ENCODE measurements at regions of chr13 and their contacts with region 1.

Region 1: GRCh38 chr13:21297914-21298831 is 121.7 kb downstream of the MRPL57 start:
- DNase-seq: peak; percentile 85
- H3K4me3 Mint-ChIP-seq: peak overlapping the region; percentile 96
- H3K27ac Mint-ChIP-seq: peak overlapping the region; percentile 70
- H3K4me1 Mint-ChIP-seq: peaks cover 36% of the 10 kb centered on the region
- H3K27me3 Mint-ChIP-seq: no peaks in the 10 kb centered on the region

Region 2: DNA sequence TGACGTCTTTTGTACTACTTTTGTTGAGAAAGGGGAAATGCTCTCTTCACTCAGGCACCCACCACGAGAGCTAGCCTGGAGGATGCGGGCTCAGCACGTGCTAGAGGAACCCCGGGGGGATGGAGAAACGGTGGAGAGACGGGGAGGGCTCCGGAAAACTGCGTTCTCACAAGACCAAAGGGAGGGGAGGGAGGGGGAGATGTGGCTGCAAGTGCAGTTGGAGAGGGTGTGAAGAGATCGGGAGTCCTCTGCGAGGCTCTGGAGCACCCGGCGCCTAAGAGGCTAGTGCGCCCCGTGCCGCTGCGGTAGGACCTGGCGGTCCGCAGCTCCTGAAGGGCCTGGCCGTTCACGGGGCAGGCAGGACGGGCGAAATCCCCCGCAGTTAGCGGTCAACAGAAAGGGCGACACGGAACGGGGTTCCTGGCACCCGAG is 352.2 kb before region 1 on chr13:
- intact Hi-C with region 1: loop called (anchors 1 kb)
- DNase-seq: no peak
- H3K4me3 Mint-ChIP-seq: peak overlapping the region; percentile 34
- H3K27ac Mint-ChIP-seq: no peak overlapping the region
- H3K4me1 Mint-ChIP-seq: peaks cover 6% of the 10 kb centered on the region
- H3K27me3 Mint-ChIP-seq: peaks cover 36% of the 10 kb centered on the region

Region 3: GRCh38 chr13:21137696-21138095 is 160.5 kb before region 1 on chr13:
- intact Hi-C with region 1: no loop called
- DNase-seq: no peak
- H3K4me3 Mint-ChIP-seq: no peak overlapping the region
- H3K27ac Mint-ChIP-seq: no peak overlapping the region
- H3K4me1 Mint-ChIP-seq: peaks cover 17% of the 10 kb centered on the region
- H3K27me3 Mint-ChIP-seq: peaks cover 15% of the 10 kb centered on the region

Region 4: GRCh38 chr13:21316376-21316775 is 18.2 kb after region 1 on chr13:
- intact Hi-C with region 1: loop called (anchors 2 kb)
- DNase-seq: no peak
- H3K4me3 Mint-ChIP-seq: no peak overlapping the region
- H3K27ac Mint-ChIP-seq: peak overlapping the region; percentile 62
- H3K4me1 Mint-ChIP-seq: peaks cover 8% of the 10 kb centered on the region
- H3K27me3 Mint-ChIP-seq: no peaks in the 10 kb centered on the region

Region 5: GRCh38 chr13:21383090-21383489 is 84.9 kb after region 1 on chr13:
- intact Hi-C with region 1: loop called (anchors 5 kb)
- DNase-seq: no peak
- H3K4me3 Mint-ChIP-seq: no peak overlapping the region
- H3K27ac Mint-ChIP-seq: no peak overlapping the region
- H3K4me1 Mint-ChIP-seq: peaks cover 3% of the 10 kb centered on the region
- H3K27me3 Mint-ChIP-seq: no peaks in the 10 kb centered on the region

Region 6: DNA sequence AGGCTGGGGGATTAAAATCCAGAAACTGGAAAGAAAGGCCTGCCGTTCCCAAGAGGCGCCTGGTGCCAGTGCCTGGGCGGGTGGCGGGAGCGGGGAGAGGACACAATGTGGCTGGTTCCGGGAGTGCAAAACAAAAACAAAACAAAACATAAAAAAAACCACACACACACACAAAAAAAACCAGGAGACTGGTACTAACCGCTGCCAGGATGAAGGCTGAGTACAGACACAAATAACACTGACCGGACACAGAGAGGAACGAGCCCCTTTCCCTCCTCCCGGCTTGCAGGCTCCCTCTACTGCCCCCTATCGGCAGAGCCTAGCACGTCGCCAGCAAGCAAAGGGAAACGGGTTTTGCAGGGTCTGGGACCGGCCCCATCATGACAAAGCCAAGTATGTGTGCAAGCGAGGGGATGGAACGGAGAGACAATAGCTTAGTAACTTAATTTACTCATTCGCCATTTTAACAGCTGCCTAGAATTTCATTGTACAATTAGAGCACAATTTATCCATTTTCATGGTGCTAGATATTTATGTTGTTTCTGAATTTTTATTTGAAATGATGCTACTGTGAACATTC is 178.8 kb after region 1 on chr13:
- intact Hi-C with region 1: loop called (anchors 1 kb)
- DNase-seq: peak; percentile 73
- H3K4me3 Mint-ChIP-seq: peak overlapping the region; percentile 67
- H3K27ac Mint-ChIP-seq: no peak overlapping the region
- H3K4me1 Mint-ChIP-seq: peaks cover 16% of the 10 kb centered on the region
- H3K27me3 Mint-ChIP-seq: peaks cover 8% of the 10 kb centered on the region

Measured in activated T-helper 1 cell treated with anti-CD3 and anti-CD28 coated beads, Interleukin-12 subunit alpha, Interleukin-12 subunit beta, Interleukin-2, Interleukin-4 antibody, amounts not matched to agents 30 ng/mL and 10 ng/mL and 1 ng/mL, durations not matched to agents 14 hours and 24 hours and 36 hours (primary cell).